ENCODE measurements at regions of chr17 and their contacts with region 1.

Region 1: GRCh38 chr17:1055751-1056645 is 59.1 kb downstream of the TIMM22 start:
- DNase-seq: peak; percentile 51
- H3K4me3 Mint-ChIP-seq: no peak overlapping the region
- H3K27ac Mint-ChIP-seq: no peak overlapping the region
- H3K4me1 Mint-ChIP-seq: peaks cover 8% of the 10 kb centered on the region
- H3K27me3 Mint-ChIP-seq: no peaks in the 10 kb centered on the region
- CTCF ChIP-seq: peak; percentile 63

Region 2: GRCh38 chr17:973053-973452 is 82.9 kb before region 1 on chr17:
- CTCF ChIA-PET with region 1: no interaction called
- POLR2A ChIA-PET with region 1: no interaction called
- intact Hi-C with region 1: no loop called
- DNase-seq: peak; percentile 32
- H3K4me3 Mint-ChIP-seq: peak overlapping the region; percentile 58
- H3K27ac Mint-ChIP-seq: peak overlapping the region; percentile 65
- H3K4me1 Mint-ChIP-seq: peaks cover 11% of the 10 kb centered on the region
- H3K27me3 Mint-ChIP-seq: no peaks in the 10 kb centered on the region
- CTCF ChIP-seq: no peak

Region 3: DNA sequence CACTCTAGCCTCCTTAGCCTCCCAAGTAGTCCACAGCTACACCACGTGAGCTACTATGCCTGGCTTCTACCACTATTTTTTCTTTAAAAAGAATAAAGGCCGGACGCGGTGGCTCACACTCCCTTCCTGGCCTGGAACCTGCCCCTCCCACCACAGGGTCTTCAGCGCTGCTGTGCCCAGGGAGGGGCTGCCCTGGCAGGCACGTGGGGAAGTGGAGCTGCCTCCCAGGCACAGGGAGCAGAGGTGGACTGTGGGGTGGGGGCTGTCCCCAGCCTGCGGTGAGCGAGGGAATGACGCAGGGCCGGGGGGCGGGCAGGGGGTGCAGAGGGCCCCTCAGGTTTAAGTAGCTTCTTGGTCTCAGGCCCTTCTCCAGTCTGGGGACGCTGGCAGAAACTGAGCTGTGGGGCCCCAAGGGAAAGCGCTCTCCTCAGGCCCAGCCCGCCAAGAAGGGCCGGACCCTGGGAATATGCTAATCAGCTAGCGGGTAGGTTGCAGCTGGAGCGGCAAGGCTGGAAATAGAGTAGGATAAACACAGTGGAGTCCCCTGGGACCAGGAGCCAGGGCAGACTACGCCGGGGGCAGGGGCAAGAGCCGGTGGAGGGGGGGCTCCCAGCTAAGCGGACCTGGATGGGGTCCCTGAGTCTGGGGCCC is 12.3 kb before region 1 on chr17:
- CTCF ChIA-PET with region 1: interaction called, 28 read pairs
- POLR2A ChIA-PET with region 1: no interaction called
- intact Hi-C with region 1: no loop called
- DNase-seq: no peak
- H3K4me3 Mint-ChIP-seq: no peak overlapping the region
- H3K27ac Mint-ChIP-seq: no peak overlapping the region
- H3K4me1 Mint-ChIP-seq: no peaks in the 10 kb centered on the region
- H3K27me3 Mint-ChIP-seq: no peaks in the 10 kb centered on the region
- CTCF ChIP-seq: no peak

Region 4: GRCh38 chr17:1098387-1098786 is 42.4 kb after region 1 on chr17:
- CTCF ChIA-PET with region 1: interaction called, 12 read pairs
- POLR2A ChIA-PET with region 1: interaction called, 4 read pairs
- intact Hi-C with region 1: no loop called
- DNase-seq: peak; percentile 84
- H3K4me3 Mint-ChIP-seq: peak overlapping the region; percentile 47
- H3K27ac Mint-ChIP-seq: no peak overlapping the region
- H3K4me1 Mint-ChIP-seq: peaks cover 4% of the 10 kb centered on the region
- H3K27me3 Mint-ChIP-seq: no peaks in the 10 kb centered on the region
- CTCF ChIP-seq: no peak

Region 5: GRCh38 chr17:1108861-1109605 is 53.0 kb after region 1 on chr17:
- CTCF ChIA-PET with region 1: interaction called, 4 read pairs
- POLR2A ChIA-PET with region 1: no interaction called
- intact Hi-C with region 1: loop called (anchors 2 kb)
- DNase-seq: peak; percentile 55
- H3K4me3 Mint-ChIP-seq: peak overlapping the region; percentile 80
- H3K27ac Mint-ChIP-seq: peak overlapping the region; percentile 27
- H3K4me1 Mint-ChIP-seq: peaks cover 33% of the 10 kb centered on the region
- H3K27me3 Mint-ChIP-seq: no peaks in the 10 kb centered on the region
- CTCF ChIP-seq: no peak

Region 6: DNA sequence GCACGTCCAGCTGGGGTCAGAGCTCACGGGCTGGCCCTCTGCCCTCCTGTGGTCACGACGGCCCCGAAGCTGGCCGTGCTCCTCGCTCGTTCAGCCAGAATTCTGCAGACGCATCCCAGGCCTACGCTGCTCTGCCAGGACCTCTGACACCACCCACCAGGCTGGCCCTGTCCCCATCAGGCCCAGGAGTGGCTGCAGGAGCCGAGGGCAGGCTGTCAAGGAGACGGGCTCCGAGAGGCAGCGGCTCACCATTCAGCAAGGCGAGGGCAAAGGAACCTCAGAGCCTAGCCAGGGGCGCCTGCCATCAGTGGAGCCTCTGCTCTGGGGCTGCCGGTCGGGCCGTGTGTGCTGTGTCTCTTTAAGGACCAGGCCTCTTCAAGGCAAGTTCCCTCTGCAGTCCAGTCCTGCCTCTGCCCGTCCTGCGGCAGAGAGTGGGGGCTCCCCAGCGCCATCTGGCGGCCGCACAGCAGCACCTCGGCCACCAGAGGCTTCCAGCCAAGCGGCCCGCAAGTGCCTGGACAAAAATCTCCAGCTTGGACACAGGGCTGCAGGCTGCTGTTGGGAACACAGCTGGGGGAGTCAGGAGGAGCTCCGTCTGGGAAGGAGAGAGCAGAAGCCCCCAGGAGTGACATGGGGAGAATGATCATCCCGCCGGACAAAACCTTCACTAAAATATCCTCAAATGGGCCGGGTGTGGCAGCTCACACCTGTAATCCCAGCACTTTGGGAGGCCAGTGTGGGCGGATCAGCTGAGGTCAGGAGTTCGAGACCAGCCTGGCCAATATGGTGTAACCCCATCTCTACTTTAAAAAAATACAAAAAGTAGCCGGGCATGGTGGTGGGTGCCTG is 131.1 kb after region 1 on chr17:
- CTCF ChIA-PET with region 1: interaction called, 6 read pairs
- POLR2A ChIA-PET with region 1: interaction called, 4 read pairs
- intact Hi-C with region 1: loop called (anchors 1 kb)
- DNase-seq: peak; percentile 74
- H3K4me3 Mint-ChIP-seq: no peak overlapping the region
- H3K27ac Mint-ChIP-seq: no peak overlapping the region
- H3K4me1 Mint-ChIP-seq: peaks cover 25% of the 10 kb centered on the region
- H3K27me3 Mint-ChIP-seq: peaks cover 18% of the 10 kb centered on the region
- CTCF ChIP-seq: peak; percentile 95

Measured in MCF 10A (cell line).